ENCODE measurements at regions of chr15 and their contacts with region 1.

Region 1: DNA sequence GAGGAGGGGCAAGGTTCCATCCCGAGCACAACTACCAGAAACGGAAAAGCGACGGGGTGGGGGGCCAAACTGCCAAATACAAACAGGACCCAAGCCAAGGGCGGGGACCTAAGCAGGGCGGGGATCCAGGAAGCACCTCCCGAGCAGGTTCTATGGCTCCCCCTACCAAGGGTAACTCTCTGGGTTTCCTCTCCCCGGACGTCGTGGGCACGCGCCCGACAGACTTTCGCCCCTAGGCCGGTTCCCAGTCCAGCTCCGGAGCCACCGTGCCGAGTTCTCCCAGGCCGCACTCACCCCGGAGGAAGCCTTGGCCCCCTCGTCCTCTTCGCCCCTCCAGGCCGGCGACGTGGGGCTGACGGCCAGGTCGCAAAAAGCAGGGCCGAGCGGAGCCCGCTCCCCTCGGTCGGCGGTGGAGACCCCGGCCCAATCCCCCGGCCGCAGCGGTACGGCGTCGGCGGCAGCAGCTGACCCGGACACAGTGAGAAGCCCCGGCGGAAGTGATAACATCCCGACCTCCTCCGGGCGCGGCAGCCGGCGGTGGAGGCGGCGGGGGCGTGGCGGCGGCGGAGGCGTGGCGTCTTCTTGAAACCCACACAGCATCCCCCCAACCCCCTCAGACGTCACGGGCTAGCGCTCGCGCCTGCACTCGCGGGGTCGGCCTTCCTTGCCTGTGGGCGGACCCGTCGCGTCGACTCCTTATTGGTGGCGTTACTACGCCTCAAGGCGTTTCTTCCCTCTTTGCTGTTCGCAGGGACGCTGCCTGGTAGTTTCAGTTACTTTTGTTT is at the start of gene BNIP2:
- DNase-seq: peak; percentile 98 to 100
- ATAC-seq: peak; percentile 95 to 98
- H3K4me3 ChIP-seq: peak within 1 kb of the TSS; percentile 80
- H3K27ac ChIP-seq: peak within 1 kb of the TSS; percentile 94 to 97
- H3K4me1 ChIP-seq: peaks cover 29% of the 10 kb centered on the region
- CTCF ChIP-seq: no peak
- EP300 ChIP-seq: 0 out of 5 replicates have a peak, but pooled peaks of 1 of the 2 experiments have one; percentile 15
- POLR2A ChIP-seq: peak; percentile 56
- RAD21 ChIP-seq: no peak
- polyA plus RNA-seq, gene BNIP2: 93.6 and 146 TPM in 2 replicates

Region 2: DNA sequence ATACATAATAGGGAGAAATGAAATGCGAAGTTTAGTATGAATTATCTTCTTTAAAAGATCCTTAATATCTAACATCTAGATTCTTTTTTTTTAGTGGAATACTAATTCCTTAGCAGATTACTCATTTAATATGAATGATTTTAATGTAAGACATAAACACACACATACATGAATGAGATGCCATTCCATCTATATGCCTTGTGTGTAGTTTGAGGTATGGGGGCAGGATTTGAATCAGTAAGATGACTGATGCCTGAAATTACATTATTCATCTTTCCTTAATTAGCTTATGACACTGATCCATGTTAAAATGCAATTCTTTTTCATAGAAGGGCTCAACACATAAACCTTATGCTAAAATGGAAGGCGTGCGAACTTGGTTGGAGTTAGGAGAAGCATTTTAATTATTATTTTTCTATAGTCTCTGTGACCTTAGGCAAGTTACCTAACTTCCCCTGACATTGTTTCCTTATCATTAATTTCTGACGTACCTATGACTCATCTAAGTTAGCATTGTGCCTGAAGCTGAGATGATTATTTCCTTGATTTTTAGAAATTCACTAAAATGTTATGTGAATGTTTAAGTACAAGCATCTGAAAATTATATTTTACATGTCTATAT is 10.9 kb after region 1 on chr15:
- CTCF ChIA-PET with region 1: interaction called, 14 read pairs
- POLR2A ChIA-PET with region 1: interaction called, 7 read pairs
- DNase-seq: peak; percentile 39 to 42
- ATAC-seq: peak in 1 of 2 experiments; percentile 21; a peak in 1 of 6 replicates
- H3K4me3 ChIP-seq: no peak overlapping the region
- H3K27ac ChIP-seq: peak overlapping the region; percentile 8; a peak in 2 of 6 replicates
- H3K4me1 ChIP-seq: peaks cover 69% of the 10 kb centered on the region
- CTCF ChIP-seq: no peak
- EP300 ChIP-seq: no peak
- POLR2A ChIP-seq: no peak
- RAD21 ChIP-seq: no peak

Region 3: GRCh38 chr15:59741274-59741906 is 52.4 kb after region 1 on chr15:
- CTCF ChIA-PET with region 1: interaction called, 11 read pairs
- POLR2A ChIA-PET with region 1: no interaction called
- DNase-seq: peak in 1 of 2 experiments; percentile 40
- ATAC-seq: peak; percentile 68 to 88
- H3K4me3 ChIP-seq: no peak overlapping the region
- H3K27ac ChIP-seq: no peak overlapping the region
- H3K4me1 ChIP-seq: no peaks in the 10 kb centered on the region
- CTCF ChIP-seq: peak; percentile 30; the same call in 1 of the 3 replicates
- EP300 ChIP-seq: no peak
- POLR2A ChIP-seq: no peak
- RAD21 ChIP-seq: peak; percentile 40 to 62; a peak in 4 of 5 replicates

Region 4: DNA sequence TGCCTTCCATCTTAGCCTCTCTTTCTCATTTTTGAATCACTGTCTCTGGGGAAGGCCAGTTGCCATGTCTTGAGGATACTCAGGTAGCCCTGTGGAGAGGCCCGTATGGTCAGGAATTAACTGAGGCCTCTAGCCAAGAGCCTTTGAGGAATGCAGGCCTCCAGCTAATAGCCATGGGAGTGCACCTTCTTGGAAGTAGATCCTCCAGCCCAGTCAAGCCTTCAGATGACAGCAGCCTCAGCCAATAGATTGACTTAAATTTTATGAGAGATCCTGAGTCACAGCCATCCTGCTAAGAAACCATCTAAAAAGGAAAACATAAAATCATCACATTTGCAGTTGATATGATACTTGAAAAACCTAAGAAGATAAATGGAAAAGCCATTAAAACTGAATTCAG is 112.6 kb after region 1 on chr15:
- CTCF ChIA-PET with region 1: no interaction called
- POLR2A ChIA-PET with region 1: no interaction called
- DNase-seq: no peak
- ATAC-seq: no peak
- H3K4me3 ChIP-seq: no peak overlapping the region
- H3K27ac ChIP-seq: no peak overlapping the region
- H3K4me1 ChIP-seq: no peaks in the 10 kb centered on the region; the same call in 2 of the 3 replicates
- CTCF ChIP-seq: no peak
- EP300 ChIP-seq: no peak
- POLR2A ChIP-seq: no peak
- RAD21 ChIP-seq: no peak

Region 5: GRCh38 chr15:60340207-60340921 is 651.3 kb after region 1 on chr15:
- CTCF ChIA-PET with region 1: interaction called, 12 read pairs
- POLR2A ChIA-PET with region 1: no interaction called
- DNase-seq: no peak
- ATAC-seq: peak; percentile 17 to 30; a peak in 5 of 6 replicates
- H3K4me3 ChIP-seq: no peak overlapping the region
- H3K27ac ChIP-seq: peak overlapping the region; percentile 10 to 56; a peak in 4 of 6 replicates
- H3K4me1 ChIP-seq: peaks cover 47% of the 10 kb centered on the region
- CTCF ChIP-seq: peak; percentile 23; the same call in 1 of the 3 replicates
- EP300 ChIP-seq: no peak
- POLR2A ChIP-seq: no peak
- RAD21 ChIP-seq: peak in 1 of 2 experiments; percentile 38; a peak in 2 of 5 replicates

Measured in A549 (cell line).